HepG2 (cell line): ENCODE measurements at regions of chrX and their contacts with region 1.

Region 1: DNA sequence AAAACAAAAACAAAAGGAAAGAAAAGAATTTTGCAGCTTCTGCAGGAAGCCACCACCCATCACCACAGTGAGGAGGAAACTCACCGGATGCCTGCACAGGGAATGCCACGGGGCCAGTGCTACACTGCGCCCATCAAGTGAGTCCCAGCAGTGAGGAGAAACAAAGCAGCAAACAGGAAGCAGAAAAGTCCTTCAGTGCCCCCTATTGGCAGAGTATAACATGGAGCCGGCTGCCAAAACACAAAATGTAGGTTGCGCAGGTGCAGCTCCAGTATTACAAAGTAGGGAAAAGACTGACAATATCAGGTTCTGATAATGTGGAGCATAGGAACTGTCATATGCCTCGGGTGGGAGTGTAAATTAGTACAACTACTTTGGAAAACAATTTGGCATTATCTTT is 23.3 kb upstream of the SCML2 start:
- DNase-seq: peak; percentile 11
- ATAC-seq: peak; percentile 83
- H3K4me3 ChIP-seq: no peak overlapping the region
- H3K27ac ChIP-seq: no peak overlapping the region
- H3K4me1 ChIP-seq: no peaks in the 10 kb centered on the region
- H3K27me3 ChIP-seq: no peaks in the 10 kb centered on the region
- CTCF ChIP-seq: peak; percentile 75
- EP300 ChIP-seq: no peak
- POLR2A ChIP-seq: no peak
- RAD21 ChIP-seq: 0 out of 2 replicates have a peak, but pooled peaks have one; percentile 13

Region 2: GRCh38 chrX:17542123-17542522 is 835.7 kb before region 1 on chrX:
- CTCF ChIA-PET with region 1: no interaction called
- POLR2A ChIA-PET with region 1: no interaction called
- in situ Hi-C with region 1: no loop called
- intact Hi-C with region 1: loop called (anchors 5 kb)
- DNase-seq: no peak
- ATAC-seq: no peak
- H3K4me3 ChIP-seq: no peak overlapping the region
- H3K27ac ChIP-seq: no peak overlapping the region
- H3K4me1 ChIP-seq: peaks cover 9% of the 10 kb centered on the region; the same call in 1 of the 2 replicates
- H3K27me3 ChIP-seq: no peaks in the 10 kb centered on the region
- CTCF ChIP-seq: no peak
- EP300 ChIP-seq: no peak
- POLR2A ChIP-seq: no peak
- RAD21 ChIP-seq: no peak

Region 3: GRCh38 chrX:17697191-17697590 is 680.6 kb before region 1 on chrX:
- CTCF ChIA-PET with region 1: interaction called, 3 read pairs
- POLR2A ChIA-PET with region 1: no interaction called
- in situ Hi-C with region 1: no loop called
- intact Hi-C with region 1: loop called (anchors 5 kb)
- DNase-seq: peak; percentile 56
- ATAC-seq: peak; percentile 58; the same call in 2 of the 3 replicates
- H3K4me3 ChIP-seq: no peak overlapping the region
- H3K27ac ChIP-seq: no peak overlapping the region
- H3K4me1 ChIP-seq: 0 out of 2 replicates have a peak, but pooled peaks cover 5% of the 10 kb centered on the region
- H3K27me3 ChIP-seq: no peaks in the 10 kb centered on the region
- CTCF ChIP-seq: peak; percentile 69
- EP300 ChIP-seq: no peak
- POLR2A ChIP-seq: no peak
- RAD21 ChIP-seq: 0 out of 2 replicates have a peak, but pooled peaks have one; percentile 27

Region 4: GRCh38 chrX:17805120-17805519 is 572.7 kb before region 1 on chrX:
- CTCF ChIA-PET with region 1: no interaction called
- POLR2A ChIA-PET with region 1: no interaction called
- in situ Hi-C with region 1: loop called (anchors 25 kb)
- intact Hi-C with region 1: loop called (anchors 2 kb)
- DNase-seq: no peak
- ATAC-seq: peak; percentile 64
- H3K4me3 ChIP-seq: no peak overlapping the region
- H3K27ac ChIP-seq: no peak overlapping the region
- H3K4me1 ChIP-seq: no peaks in the 10 kb centered on the region
- H3K27me3 ChIP-seq: no peaks in the 10 kb centered on the region
- CTCF ChIP-seq: 0 out of 2 replicates have a peak, but pooled peaks have one; percentile 14
- EP300 ChIP-seq: no peak
- POLR2A ChIP-seq: no peak
- RAD21 ChIP-seq: no peak

Region 5: DNA sequence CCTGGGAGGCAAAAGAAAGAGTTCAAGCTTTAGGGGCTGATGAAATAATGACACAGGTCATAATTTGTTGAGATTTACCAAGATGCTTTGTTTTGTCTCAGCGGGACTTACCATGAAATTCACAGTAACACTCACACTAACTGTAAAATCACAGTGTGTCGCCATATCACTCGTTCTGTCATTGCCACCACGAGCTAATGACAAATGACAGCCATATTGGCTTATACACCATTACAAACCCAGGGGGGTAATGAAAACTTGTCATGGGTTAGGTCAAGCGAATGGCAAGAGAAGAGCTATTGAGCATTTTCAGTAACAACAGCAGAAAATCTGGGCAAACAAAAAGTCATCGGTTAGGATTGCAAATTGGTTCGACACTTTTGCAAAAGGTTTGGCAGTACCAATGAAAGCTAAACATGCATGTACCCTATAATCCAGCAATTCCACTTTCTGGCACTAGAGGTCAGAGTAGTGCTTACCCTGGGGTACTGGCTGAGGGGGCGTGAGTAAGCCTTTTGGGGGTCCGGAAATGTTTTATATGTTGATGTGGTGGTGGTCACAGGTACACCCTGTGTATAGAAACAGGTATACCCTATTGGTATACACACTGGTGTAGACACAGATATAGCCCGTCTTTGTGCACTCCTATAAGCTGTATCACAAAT is 432.8 kb before region 1 on chrX:
- CTCF ChIA-PET with region 1: no interaction called
- POLR2A ChIA-PET with region 1: no interaction called
- in situ Hi-C with region 1: loop called (anchors 25 kb)
- intact Hi-C with region 1: loop called (anchors 5 kb)
- DNase-seq: peak; percentile 7
- ATAC-seq: no peak
- H3K4me3 ChIP-seq: no peak overlapping the region
- H3K27ac ChIP-seq: no peak overlapping the region
- H3K4me1 ChIP-seq: no peaks in the 10 kb centered on the region
- H3K27me3 ChIP-seq: no peaks in the 10 kb centered on the region
- CTCF ChIP-seq: peak; percentile 60
- EP300 ChIP-seq: no peak
- POLR2A ChIP-seq: no peak
- RAD21 ChIP-seq: no peak